H1 (cell line): ENCODE measurements at regions of chr11 and their contacts with region 1.

Region 1: DNA sequence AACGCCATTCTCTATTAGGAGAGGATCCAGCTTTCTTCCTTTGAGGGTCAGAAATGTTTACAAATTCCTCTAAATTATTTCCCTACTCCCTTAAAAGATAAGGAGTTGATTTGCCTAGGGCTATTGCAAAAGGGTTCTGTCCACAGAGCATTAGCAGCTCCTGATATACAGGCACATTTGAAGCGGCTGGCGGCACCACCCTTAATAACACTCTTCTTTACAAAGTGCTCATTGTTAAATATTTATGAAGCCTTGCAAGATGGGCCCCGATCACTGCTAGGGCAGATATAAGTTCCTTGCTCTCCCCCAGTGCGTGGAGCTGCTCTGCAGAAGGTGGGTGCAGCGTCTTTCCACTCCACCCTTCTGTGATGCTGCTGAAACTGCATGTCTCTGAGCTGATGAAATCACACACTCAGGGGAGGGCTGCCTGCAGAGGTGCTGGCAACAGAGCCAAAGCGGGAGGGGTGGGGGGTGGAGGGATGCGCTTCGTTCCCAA is 116.7 kb upstream of the NTM start:
- DNase-seq: peak; percentile 52 to 53
- H3K4me3 ChIP-seq: peak overlapping the region; percentile 55 to 74 (median 58)
- H3K27ac ChIP-seq: peak overlapping the region; percentile 88
- H3K4me1 ChIP-seq: peaks cover 2 to 8% (median 6%) of the 10 kb centered on the region in 4 experiments; a peak in 5 of 7 replicates
- H3K27me3 ChIP-seq: no peaks in the 10 kb centered on the region
- CTCF ChIP-seq: no peak
- EP300 ChIP-seq: no peak
- POLR2A ChIP-seq: peak in 1 of 2 experiments; percentile 27; a peak in 1 of 3 replicates
- RAD21 ChIP-seq: no peak

Region 2: DNA sequence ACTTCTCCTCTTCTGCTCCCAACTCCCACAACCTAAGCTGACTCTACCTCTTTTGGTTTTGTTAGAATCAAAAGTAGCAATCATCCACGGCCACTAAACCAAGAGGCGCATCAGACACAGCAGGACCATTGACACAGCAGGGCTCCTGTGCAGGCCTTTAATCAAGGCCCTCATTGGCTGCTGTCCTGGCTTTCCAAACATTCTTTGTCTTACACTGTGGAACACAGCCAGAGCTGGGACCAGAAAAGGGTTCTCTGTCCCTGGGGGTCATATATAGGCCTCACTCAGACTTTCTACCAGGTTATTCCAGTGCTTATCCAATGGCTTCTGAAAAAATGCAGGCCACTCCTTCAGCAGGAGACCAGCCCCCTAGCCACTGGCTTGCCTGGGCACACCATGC is 96.0 kb before region 1 on chr11:
- CTCF ChIA-PET with region 1: no interaction called
- POLR2A ChIA-PET with region 1: no interaction called
- DNase-seq: no peak
- H3K4me3 ChIP-seq: no peak overlapping the region
- H3K27ac ChIP-seq: no peak overlapping the region
- H3K4me1 ChIP-seq: peaks cover 0 to 6% (median 3%) of the 10 kb centered on the region in 4 experiments; a peak in 5 of 7 replicates
- H3K27me3 ChIP-seq: 0 out of 7 replicates have a peak, but pooled peaks cover 0 to 2% (median 0%) of the 10 kb centered on the region in 4 experiments
- CTCF ChIP-seq: no peak
- EP300 ChIP-seq: no peak
- POLR2A ChIP-seq: no peak
- RAD21 ChIP-seq: no peak

Region 3: DNA sequence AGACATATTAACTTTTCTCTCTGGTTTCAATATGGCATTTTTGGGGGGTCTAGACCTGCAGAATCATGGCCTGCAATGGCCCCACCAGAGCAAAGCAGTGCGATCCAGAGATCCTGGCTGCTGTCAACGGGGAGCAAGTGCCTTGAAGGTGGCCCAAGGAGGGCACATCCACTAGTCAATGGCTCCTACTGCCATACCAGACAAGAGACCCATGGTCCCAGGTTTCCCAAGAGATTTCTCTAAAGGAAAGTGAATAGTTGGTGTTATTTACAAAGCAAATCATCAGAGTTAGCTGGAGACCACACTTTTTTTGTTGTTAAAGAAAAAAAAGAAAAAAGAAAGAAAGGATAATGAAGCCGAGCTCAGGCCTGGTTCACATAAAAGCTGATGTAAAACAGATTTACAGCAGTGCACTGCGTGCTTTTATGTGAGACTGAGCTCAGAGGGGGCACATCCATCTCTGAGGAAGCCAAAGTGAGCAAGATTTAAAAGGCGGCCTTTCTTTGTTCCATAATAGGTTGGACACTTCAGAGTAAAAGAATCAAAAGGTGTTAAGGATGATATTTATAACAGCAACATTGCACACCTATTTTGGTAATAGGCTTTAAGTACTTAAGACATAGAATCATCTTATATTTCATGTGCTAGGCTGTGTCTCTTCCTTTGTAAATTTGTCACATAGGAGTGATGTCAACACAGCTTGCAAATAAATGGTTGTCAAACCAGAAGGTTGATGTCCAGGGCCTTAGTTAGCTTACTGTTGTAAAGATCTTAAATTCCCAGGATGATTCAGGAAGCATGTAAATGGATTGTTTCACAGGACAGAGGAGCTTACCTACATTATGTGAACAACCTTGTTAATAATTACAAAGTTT is 84.6 kb before region 1 on chr11:
- CTCF ChIA-PET with region 1: no interaction called
- POLR2A ChIA-PET with region 1: no interaction called
- DNase-seq: no peak
- H3K4me3 ChIP-seq: no peak overlapping the region
- H3K27ac ChIP-seq: no peak overlapping the region
- H3K4me1 ChIP-seq: no peaks in the 10 kb centered on the region
- H3K27me3 ChIP-seq: no peaks in the 10 kb centered on the region
- CTCF ChIP-seq: no peak
- EP300 ChIP-seq: no peak
- POLR2A ChIP-seq: no peak
- RAD21 ChIP-seq: no peak

Region 4: GRCh38 chr11:131217313-131218310 is 36.1 kb before region 1 on chr11:
- CTCF ChIA-PET with region 1: interaction called, 3 read pairs
- POLR2A ChIA-PET with region 1: interaction called, 24 read pairs
- DNase-seq: no peak
- H3K4me3 ChIP-seq: no peak overlapping the region
- H3K27ac ChIP-seq: peak overlapping the region; percentile 52; the same call in 1 of the 2 replicates
- H3K4me1 ChIP-seq: peaks cover 4 to 26% (median 17%) of the 10 kb centered on the region in 4 experiments
- H3K27me3 ChIP-seq: no peaks in the 10 kb centered on the region; a peak in 2 of 7 replicates
- CTCF ChIP-seq: peak in 2 of 3 experiments; percentile 32 to 35; a peak in 3 of 4 replicates
- EP300 ChIP-seq: no peak
- POLR2A ChIP-seq: no peak
- RAD21 ChIP-seq: peak; percentile 37 to 62; a peak in 3 of 4 replicates

Region 5: GRCh38 chr11:131234221-131234620 is 19.5 kb before region 1 on chr11:
- CTCF ChIA-PET with region 1: interaction called, 9 read pairs
- POLR2A ChIA-PET with region 1: interaction called, 39 read pairs
- DNase-seq: no peak
- H3K4me3 ChIP-seq: no peak overlapping the region
- H3K27ac ChIP-seq: no peak overlapping the region
- H3K4me1 ChIP-seq: peaks cover 0 to 16% (median 9%) of the 10 kb centered on the region in 4 experiments
- H3K27me3 ChIP-seq: no peaks in the 10 kb centered on the region
- CTCF ChIP-seq: no peak
- EP300 ChIP-seq: no peak
- POLR2A ChIP-seq: no peak
- RAD21 ChIP-seq: no peak

Region 6: DNA sequence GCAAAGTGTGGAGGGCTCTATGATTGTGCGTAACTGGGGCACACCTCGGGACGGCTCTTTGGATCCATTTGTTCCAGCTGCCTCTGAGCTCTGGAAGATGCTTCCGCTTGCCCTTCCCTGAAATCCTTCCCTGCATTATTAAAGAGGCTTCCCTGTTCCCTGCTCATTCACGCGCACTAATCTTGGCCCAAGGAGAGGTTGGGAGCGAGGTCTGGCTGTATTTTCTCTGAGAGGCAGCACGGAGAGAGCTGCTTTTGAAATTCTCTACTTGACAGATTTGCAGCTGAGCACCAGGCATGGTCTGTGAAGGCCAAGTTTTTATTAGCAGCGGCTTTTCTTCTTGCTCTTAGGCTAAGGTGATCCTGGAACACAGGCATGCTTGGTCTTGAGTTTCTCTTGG is 21.9 kb after region 1 on chr11:
- CTCF ChIA-PET with region 1: interaction called, 4 read pairs
- POLR2A ChIA-PET with region 1: interaction called, 70 read pairs
- DNase-seq: no peak
- H3K4me3 ChIP-seq: no peak overlapping the region
- H3K27ac ChIP-seq: no peak overlapping the region
- H3K4me1 ChIP-seq: peaks cover 2 to 17% (median 13%) of the 10 kb centered on the region in 4 experiments
- H3K27me3 ChIP-seq: no peaks in the 10 kb centered on the region
- CTCF ChIP-seq: no peak
- EP300 ChIP-seq: no peak
- POLR2A ChIP-seq: no peak
- RAD21 ChIP-seq: no peak

Region 7: DNA sequence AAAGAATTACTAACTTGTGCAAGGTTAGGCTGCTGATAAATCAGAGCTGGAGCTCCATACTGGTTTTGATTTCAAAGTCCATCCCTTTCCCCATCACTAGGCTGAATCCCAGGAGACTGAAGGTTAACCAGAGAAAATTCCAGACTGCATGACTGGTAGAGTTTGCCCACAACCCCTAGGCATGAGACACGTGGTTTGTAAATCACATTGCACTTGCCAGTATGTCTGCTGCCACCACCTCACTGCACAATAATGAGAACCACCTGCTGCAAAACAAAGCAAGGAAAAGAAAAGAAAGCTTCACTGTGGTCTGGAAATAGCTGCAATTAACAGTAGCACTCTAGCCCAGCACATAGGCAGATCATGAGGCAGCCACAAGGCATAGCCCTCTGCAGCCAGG is 49.1 kb after region 1 on chr11:
- CTCF ChIA-PET with region 1: no interaction called
- POLR2A ChIA-PET with region 1: interaction called, 14 read pairs
- DNase-seq: no peak
- H3K4me3 ChIP-seq: no peak overlapping the region
- H3K27ac ChIP-seq: no peak overlapping the region
- H3K4me1 ChIP-seq: peaks cover 0 to 1% (median 0%) of the 10 kb centered on the region in 4 experiments; a peak in 1 of 7 replicates
- H3K27me3 ChIP-seq: no peaks in the 10 kb centered on the region
- CTCF ChIP-seq: no peak
- EP300 ChIP-seq: no peak
- POLR2A ChIP-seq: no peak; a peak in 1 of 3 replicates
- RAD21 ChIP-seq: no peak